Calu3 (cell line): ENCODE measurements at regions of chr5 and their contacts with region 1.

Region 1: DNA sequence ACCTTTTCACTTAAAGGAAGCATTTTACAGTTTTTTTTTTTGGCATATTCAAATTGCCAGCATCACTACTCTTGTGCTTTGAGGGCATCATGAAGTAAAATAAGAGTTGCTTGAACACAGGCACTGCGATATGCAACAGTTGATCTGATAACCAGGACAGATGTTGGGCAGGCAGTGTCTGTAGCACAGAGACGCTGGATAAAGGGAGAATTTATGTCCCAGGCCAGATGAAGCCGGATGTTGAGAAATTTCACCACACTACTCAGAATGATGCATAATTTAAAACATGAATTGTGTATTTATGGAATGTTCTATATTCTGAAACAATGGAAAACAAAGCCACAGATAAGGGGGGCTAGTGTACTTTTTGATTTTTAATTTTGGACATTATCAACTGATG is 71.4 kb downstream of the SLC12A2 start:
- DNase-seq: no peak
- H3K4me3 Mint-ChIP-seq: no peak overlapping the region
- H3K27ac Mint-ChIP-seq: no peak overlapping the region
- H3K4me1 Mint-ChIP-seq: no peaks in the 10 kb centered on the region
- H3K27me3 Mint-ChIP-seq: no peaks in the 10 kb centered on the region
- CTCF ChIP-seq: no peak

Region 2: GRCh38 chr5:128192368-128192767 is 37.4 kb after region 1 on chr5:
- CTCF ChIA-PET with region 1: no interaction called
- intact Hi-C with region 1: loop called (anchors 5 kb)
- DNase-seq: no peak
- H3K4me3 Mint-ChIP-seq: no peak overlapping the region
- H3K27ac Mint-ChIP-seq: no peak overlapping the region
- H3K4me1 Mint-ChIP-seq: peaks cover 6% of the 10 kb centered on the region
- H3K27me3 Mint-ChIP-seq: no peaks in the 10 kb centered on the region
- CTCF ChIP-seq: no peak